Tibial artery (tissue), 4 donors: ENCODE measurements at regions of chr9 and their contacts with region 1.

Region 1: DNA sequence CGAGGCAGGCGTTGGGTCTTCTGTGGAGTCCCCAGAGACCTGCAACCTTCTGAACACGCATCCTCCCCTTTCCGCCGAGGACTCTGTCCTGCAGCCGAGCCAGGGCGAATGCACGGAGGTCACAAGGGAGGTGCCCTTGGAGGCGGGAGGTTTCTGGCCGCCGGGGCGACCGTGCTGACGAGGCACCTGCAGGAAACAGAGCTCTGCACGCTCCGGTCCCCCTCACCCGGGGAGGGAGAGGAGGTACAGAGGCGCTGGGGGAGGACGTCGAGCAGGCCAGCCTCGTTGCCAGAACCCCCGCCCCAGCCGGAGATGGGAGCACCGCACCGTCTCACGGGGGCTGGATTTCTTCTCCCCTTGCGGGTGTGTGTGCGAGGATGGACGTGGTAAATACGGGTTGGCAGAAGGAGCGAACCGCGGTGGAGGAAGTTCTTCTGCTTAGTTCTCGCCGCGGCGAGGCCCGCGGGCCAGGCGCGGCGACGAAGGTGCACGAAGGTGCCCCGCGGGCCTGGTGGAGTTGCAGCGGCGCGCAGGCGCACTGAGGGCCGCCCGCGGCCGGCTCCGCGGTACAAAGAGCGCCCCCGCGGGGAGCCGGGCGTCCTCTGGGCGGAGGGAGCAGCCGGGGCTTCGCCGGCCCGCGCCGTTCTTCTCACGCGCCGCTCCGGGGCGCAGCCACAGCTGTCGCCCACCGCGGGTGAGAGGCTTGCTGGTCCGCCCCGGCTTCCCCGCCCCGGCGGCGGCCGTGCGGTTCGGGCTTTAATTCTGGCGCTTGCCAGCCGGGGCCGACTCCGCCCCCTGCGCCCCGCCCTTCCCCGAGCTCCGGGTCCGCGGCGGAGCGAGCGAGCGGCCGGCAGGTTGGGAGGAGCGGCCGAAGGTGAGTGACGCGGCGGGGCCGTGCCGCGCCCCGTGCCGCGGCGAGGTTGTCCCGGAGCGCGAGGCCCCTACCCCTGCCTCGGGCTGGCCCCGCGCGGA is 289.5 kb downstream of the DOCK8 start:
- DNase-seq: peak; percentile 52 to 74
- H3K4me3 ChIP-seq: peak within 1 kb of the TSS; percentile 62 to 81
- H3K27ac ChIP-seq: peak within 1 kb of the TSS; percentile 37 to 64
- H3K4me1 ChIP-seq: peaks cover 0 to 19% (median 12%) of the 10 kb centered on the region in 4 donors
- H3K27me3 ChIP-seq: no peaks in the 10 kb centered on the region
- CTCF ChIP-seq: peak; percentile 11 to 27

Region 2: DNA sequence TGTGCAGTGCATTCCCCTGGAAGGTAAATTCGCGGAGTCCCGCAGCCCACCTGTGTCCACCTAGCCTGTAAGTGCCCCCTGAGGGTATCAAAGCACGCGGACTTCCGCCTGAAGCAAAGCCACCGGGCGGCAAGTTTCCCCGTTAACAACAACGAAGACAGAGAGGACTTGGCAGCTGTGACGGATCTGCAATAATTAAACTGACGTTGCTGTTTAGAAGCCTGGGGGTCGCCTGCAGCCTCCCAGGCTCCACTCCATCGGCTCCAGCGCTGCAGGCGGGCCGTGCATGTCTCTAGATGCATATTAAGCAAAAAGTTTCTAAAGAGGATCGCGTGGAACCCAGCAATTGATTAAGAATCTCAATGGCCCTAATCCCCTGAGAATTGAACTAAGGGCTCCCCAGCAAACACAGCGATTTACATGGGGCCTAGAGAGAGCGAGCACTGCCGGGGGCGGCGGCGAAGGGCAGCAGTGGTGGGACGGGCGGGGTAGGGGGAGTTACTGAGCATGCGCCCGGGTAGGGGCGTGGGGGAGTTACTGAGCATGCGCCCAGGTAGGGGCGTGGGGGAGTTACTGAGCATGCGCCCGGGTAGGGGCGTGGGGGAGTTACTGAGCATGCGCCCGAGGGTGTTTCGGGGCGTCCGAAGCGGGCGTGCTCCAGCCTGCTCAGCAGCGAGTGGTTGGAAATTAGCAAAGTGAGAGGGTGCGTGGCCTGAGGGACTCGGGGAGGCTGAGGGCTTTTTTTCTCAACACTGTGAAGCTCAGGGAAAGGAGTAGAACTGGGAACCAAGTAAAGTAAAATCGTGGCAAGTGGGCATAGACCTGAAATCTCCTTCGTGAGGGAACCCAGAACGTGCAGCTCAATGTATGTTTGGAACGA is 34.3 kb before region 1 on chr9:
- intact Hi-C with region 1: loop called (anchors 2 kb)
- DNase-seq: peak; percentile 71 to 90
- H3K4me3 ChIP-seq: peak overlapping the region; percentile 54 to 72
- H3K27ac ChIP-seq: peak overlapping the region; percentile 36 to 45
- H3K4me1 ChIP-seq: peaks cover 6 to 13% (median 9%) of the 10 kb centered on the region in 4 donors
- H3K27me3 ChIP-seq: no peaks in the 10 kb centered on the region
- CTCF ChIP-seq: no peak

Region 3: DNA sequence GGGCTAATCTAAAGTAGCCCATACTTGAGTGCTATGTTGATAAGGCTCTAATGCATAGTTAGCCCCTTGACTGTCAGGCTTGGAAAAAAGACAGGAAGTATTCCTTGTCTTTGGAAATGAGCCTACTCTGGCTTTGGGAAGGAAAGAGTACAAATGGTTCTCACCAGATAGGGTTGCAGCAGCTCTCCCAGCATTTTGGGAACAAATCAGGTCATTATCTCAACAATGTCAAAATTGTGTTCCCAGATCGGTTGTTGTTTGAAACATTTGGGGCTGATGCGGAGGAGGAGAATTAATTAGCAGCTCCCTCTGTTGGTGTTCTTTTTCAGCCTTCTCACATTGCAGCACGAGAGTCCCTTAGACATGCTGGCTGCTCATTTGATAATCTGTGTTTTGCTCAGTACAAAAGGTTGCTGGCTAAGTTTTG is 42.6 kb after region 1 on chr9:
- intact Hi-C with region 1: no loop called
- DNase-seq: peak in 1 of 2 donors; percentile 31
- H3K4me3 ChIP-seq: no peak overlapping the region
- H3K27ac ChIP-seq: no peak overlapping the region
- H3K4me1 ChIP-seq: peaks cover 0 to 18% (median 5%) of the 10 kb centered on the region in 4 donors
- H3K27me3 ChIP-seq: no peaks in the 10 kb centered on the region
- CTCF ChIP-seq: peak; percentile 20 to 31

Region 4: GRCh38 chr9:763692-764524 is 259.7 kb after region 1 on chr9:
- intact Hi-C with region 1: loop called (anchors 10 kb)
- DNase-seq: peak; percentile 60 to 77
- H3K4me3 ChIP-seq: peak overlapping the region in 1 of 2 donors; percentile 23
- H3K27ac ChIP-seq: no peak overlapping the region
- H3K4me1 ChIP-seq: peaks cover 0 to 16% (median 6%) of the 10 kb centered on the region in 4 donors
- H3K27me3 ChIP-seq: no peaks in the 10 kb centered on the region
- CTCF ChIP-seq: peak; percentile 90

Region 5: DNA sequence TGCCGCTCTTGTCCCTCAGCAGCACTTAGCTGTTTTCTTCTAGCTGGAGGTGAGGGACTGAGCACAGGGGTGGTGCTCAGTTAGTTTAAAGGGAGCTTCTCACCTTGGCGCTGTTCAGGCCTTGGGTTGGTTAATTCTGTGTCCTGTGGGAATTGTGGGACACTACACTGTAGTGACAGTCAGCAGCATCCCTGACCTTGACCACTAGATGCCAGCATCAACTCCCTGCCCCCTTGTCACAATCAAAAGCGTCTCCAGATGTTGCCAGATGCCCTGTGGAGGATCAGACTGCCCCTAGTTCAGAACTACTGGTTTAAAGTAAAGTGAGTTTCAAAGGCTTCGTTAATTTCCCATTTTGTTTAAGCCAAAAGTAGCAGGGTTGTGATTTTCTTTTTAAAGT is 406.8 kb after region 1 on chr9:
- intact Hi-C with region 1: no loop called
- DNase-seq: no peak
- H3K4me3 ChIP-seq: no peak overlapping the region
- H3K27ac ChIP-seq: no peak overlapping the region
- H3K4me1 ChIP-seq: no peaks in the 10 kb centered on the region
- H3K27me3 ChIP-seq: peaks cover 0 to 26% of the 10 kb centered on the region in 2 donors
- CTCF ChIP-seq: no peak